Activated naive CD4-positive, alpha-beta T cell treated with anti-CD3 and anti-CD28 coated beads, Interleukin-2, amount 10 ng/mL, durations not matched to agents 7 days and 5 days (primary cell): ENCODE measurements at regions of chr20 and their contacts with region 1.

Region 1: DNA sequence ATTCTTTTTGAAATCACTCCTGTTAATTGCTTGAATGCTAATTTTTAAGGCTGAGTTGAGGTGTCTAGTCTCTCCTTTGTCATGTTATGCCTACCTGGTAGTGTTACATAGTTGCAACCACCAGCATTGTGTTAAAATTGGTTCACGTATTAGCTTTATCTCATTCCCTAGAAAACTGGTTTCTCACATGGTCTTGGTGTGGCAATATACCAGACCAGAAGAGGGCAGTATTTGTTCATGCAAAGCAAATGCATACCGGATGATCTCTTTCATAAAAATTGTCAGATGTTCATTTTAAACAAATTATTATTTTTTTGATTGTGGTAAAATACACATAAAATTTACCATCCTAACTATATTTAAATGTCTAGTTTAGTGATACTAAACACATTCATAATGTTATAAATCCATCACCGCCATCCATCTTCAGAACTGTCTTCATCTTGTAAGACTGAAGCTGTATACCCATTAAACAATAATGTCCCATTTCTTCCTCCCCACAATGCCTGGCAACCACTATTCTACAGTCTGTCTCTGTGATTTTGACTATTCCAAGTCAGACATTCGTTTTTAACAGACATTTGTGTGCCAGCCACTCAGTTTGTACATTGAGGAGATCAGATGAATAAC is 92.8 kb downstream of the ATRN start:
- DNase-seq: no peak
- H3K4me3 Mint-ChIP-seq: no peak overlapping the region
- H3K27ac Mint-ChIP-seq: no peak overlapping the region
- H3K4me1 Mint-ChIP-seq: no peaks in the 10 kb centered on the region
- H3K27me3 Mint-ChIP-seq: no peaks in the 10 kb centered on the region

Region 2: GRCh38 chr20:3551681-3552434 is 11.8 kb before region 1 on chr20:
- CTCF ChIA-PET with region 1: interaction called, 13 read pairs
- DNase-seq: no peak
- H3K4me3 Mint-ChIP-seq: no peak overlapping the region
- H3K27ac Mint-ChIP-seq: no peak overlapping the region
- H3K4me1 Mint-ChIP-seq: no peaks in the 10 kb centered on the region
- H3K27me3 Mint-ChIP-seq: no peaks in the 10 kb centered on the region

Region 3: DNA sequence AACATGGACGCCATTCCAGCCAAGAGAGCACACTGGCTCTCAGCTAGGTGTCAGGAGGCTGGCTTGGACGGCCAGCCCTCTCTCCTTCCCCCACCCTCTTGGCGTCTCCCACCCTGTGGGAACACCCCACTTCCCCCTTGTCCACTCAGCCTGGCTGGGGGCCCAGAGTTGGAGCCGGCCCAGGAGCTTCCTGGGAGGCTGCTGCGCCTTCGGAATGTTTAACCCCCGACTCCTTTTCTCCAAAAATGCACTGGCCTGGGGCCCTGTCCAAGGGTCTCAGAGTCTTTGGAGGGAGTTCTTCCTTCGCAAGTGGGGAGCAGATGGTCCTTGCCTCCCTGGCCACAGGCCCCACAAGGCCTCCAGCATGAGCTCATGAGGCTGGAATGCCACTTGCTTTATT is 114.1 kb after region 1 on chr20:
- CTCF ChIA-PET with region 1: interaction called, 12 read pairs
- DNase-seq: no peak
- H3K4me3 Mint-ChIP-seq: no peak overlapping the region
- H3K27ac Mint-ChIP-seq: no peak overlapping the region
- H3K4me1 Mint-ChIP-seq: peaks cover 9% of the 10 kb centered on the region
- H3K27me3 Mint-ChIP-seq: peaks cover 98% of the 10 kb centered on the region